HepG2 (cell line): ENCODE measurements at regions of chr2 and their contacts with region 1.

Region 1: GRCh38 chr2:3651691-3652648 is 6.0 kb upstream of the ALLC start:
- DNase-seq: peak; percentile 92
- ATAC-seq: peak; percentile 80
- H3K4me3 ChIP-seq: peak overlapping the region; percentile 30 to 71 (median 35)
- H3K27ac ChIP-seq: peak overlapping the region; percentile 54
- H3K4me1 ChIP-seq: peaks cover 58% of the 10 kb centered on the region
- H3K27me3 ChIP-seq: peaks cover 6 to 21% of the 10 kb centered on the region in 2 experiments; a peak in 1 of 5 replicates
- CTCF ChIP-seq: no peak
- EP300 ChIP-seq: peak in 1 of 2 experiments; percentile 33; a peak in 2 of 4 replicates
- POLR2A ChIP-seq: peak in 1 of 2 experiments; percentile 46; a peak in 2 of 4 replicates
- RAD21 ChIP-seq: peak; percentile 24; the same call in 1 of the 2 replicates

Region 2: DNA sequence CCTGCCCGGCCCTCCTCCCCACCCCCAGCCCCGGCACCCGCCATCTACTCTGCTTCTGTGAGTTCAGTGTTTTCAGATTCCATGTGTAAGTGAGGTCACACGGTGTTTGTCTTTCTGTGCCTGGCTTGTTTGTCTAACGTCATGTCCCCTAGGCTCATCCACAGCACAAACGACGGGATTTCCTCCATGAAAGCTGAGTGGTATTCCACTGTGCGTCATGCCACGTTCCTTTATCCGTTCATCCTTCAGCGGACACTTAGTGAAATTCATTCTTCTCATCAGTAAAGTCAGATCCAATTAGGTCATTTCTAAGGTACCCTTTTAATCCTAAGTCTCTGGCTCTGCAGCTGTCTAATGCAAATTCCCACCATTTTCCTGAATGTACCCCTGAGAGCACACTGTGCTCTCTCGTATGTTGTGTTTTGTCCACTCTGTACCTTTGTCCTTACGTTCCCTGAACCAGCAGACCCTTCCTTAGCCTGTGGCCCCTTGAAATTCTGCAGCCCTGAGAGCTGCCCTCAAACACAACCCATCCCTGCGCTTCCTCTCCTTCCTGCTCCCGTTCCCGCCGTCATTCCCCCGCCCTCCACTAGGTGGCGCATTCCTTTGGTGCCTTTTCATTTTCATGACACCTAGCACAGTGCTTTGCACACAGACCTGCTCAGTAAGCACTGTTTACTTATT is 228.3 kb before region 1 on chr2:
- CTCF ChIA-PET with region 1: interaction called, 8 read pairs
- POLR2A ChIA-PET with region 1: no interaction called
- in situ Hi-C with region 1: no loop called
- intact Hi-C with region 1: loop called (anchors 1 kb)
- DNase-seq: peak; percentile 83
- ATAC-seq: peak; percentile 87
- H3K4me3 ChIP-seq: no peak overlapping the region
- H3K27ac ChIP-seq: peak overlapping the region; percentile 32
- H3K4me1 ChIP-seq: peaks cover 16% of the 10 kb centered on the region
- H3K27me3 ChIP-seq: no peaks in the 10 kb centered on the region
- CTCF ChIP-seq: peak; percentile 98
- EP300 ChIP-seq: no peak
- POLR2A ChIP-seq: no peak
- RAD21 ChIP-seq: peak; percentile 73

Region 3: GRCh38 chr2:3536682-3537632 is 115.0 kb before region 1 on chr2:
- CTCF ChIA-PET with region 1: interaction called, 4 read pairs
- POLR2A ChIA-PET with region 1: interaction called, 10 read pairs
- in situ Hi-C with region 1: no loop called
- intact Hi-C with region 1: loop called (anchors 1 kb)
- DNase-seq: peak; percentile 82
- ATAC-seq: peak; percentile 89
- H3K4me3 ChIP-seq: peak overlapping the region; percentile 59 to 79 (median 73)
- H3K27ac ChIP-seq: peak overlapping the region; percentile 92
- H3K4me1 ChIP-seq: peaks cover 41% of the 10 kb centered on the region
- H3K27me3 ChIP-seq: no peaks in the 10 kb centered on the region; a peak in 1 of 5 replicates
- CTCF ChIP-seq: peak; percentile 82
- EP300 ChIP-seq: no peak
- POLR2A ChIP-seq: no peak; a peak in 1 of 4 replicates
- RAD21 ChIP-seq: peak; percentile 71

Region 4: GRCh38 chr2:3585261-3586109 is 66.5 kb before region 1 on chr2:
- CTCF ChIA-PET with region 1: no interaction called
- POLR2A ChIA-PET with region 1: interaction called, 14 read pairs
- in situ Hi-C with region 1: no loop called
- intact Hi-C with region 1: loop called (anchors 2 kb)
- DNase-seq: peak; percentile 88
- ATAC-seq: peak; percentile 82
- H3K4me3 ChIP-seq: peak overlapping the region; percentile 27 to 61 (median 48)
- H3K27ac ChIP-seq: peak overlapping the region; percentile 70
- H3K4me1 ChIP-seq: peaks cover 47% of the 10 kb centered on the region
- H3K27me3 ChIP-seq: no peaks in the 10 kb centered on the region
- CTCF ChIP-seq: peak; percentile 2; the same call in 1 of the 2 replicates
- EP300 ChIP-seq: peak in 1 of 2 experiments; percentile 83; a peak in 2 of 4 replicates
- POLR2A ChIP-seq: peak in 1 of 2 experiments; percentile 63; a peak in 2 of 4 replicates
- RAD21 ChIP-seq: no peak